WTC11 (cell line): ENCODE measurements at regions of chr1 and their contacts with region 1.

Region 1: DNA sequence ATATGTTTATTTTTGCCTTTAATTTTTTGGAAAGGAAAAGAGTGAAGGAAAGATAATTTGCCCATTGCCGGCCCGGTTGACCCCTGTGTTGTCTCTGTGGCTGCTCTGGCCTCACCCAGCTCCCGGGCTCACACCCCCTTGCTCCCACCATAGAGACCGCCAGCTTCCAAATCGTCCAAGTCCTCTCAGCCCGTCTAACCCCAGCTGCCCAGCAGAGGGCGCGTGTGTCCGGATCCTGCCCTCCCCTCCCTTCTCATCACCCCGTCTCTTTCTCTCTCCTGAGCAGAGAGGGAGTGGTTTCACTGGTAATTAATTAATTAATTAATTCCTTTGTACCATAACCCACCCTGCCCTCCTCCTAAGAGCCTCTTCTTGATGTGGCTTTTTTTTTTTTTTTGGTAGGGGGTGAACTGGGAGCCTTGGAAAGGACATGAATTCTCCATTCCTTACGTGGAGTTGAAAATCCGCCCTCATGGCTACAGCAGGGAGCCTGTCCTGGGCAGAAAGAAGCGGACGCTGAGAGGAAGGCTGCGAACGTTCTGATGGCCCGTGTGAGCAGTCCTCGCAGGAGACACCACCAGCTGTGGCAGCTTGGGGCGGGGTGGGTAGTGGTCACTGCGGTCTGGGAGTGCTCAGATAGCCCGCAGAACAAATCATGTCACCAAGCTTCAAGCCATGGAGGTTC is 45.9 kb downstream of the KIAA0040 start:
- DNase-seq: peak; percentile 91
- ATAC-seq: peak; percentile 96
- H3K4me3 Mint-ChIP-seq: no peak overlapping the region
- H3K27ac Mint-ChIP-seq: no peak overlapping the region
- H3K4me1 Mint-ChIP-seq: peaks cover 43% of the 10 kb centered on the region
- H3K27me3 Mint-ChIP-seq: peaks cover 27% of the 10 kb centered on the region
- CTCF ChIP-seq: peak; percentile 84

Region 2: DNA sequence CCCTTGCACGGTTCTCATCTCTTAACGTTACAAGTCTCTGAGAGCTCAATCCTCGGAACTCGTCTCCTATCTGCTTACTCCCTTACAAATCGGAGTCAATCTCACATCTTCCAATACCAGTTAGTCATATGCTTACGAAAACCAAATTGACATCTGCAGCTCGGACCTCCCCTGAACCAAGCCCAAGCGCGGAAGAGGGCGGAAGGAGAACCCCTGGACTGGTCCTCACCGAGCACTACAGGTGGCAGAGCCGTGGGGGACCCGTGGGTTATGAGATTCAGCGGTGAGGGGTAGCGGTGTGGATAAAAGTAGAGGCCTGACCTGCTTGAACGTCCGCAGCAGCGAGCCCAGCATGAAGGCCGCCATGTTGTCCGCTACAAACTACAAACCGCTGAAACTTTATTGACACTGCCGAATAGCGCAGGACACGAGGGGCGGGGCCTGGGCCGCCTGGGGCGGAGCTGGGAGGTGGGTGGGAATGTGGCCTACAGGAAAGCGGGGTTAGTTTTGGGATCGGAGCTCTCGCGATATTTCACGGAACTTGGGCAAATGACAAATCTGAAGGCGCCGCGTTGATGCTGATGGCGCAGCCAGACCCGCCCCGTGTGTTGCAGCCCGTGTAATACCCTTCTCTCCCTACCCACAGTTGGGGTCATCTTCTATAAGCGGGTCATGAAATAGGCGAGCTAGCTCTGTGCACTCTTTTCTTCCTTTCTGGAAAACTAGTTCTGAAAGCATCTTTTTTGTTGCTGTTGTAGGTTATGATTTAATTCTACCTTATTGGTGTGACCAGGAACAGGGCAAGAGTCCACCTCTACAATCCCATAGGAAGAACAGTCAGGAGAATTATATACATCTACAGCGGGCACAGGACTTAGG is 123.4 kb before region 1 on chr1 and contains the start of gene MRPS14:
- CTCF ChIA-PET with region 1: interaction called, 84 read pairs
- POLR2A ChIA-PET with region 1: interaction called, 3 read pairs
- DNase-seq: peak; percentile 99
- ATAC-seq: peak; percentile 97
- H3K4me3 Mint-ChIP-seq: peak within 1 kb of the TSS; percentile 98
- H3K27ac Mint-ChIP-seq: peak within 1 kb of the TSS; percentile 97
- H3K4me1 Mint-ChIP-seq: peaks cover 4% of the 10 kb centered on the region
- H3K27me3 Mint-ChIP-seq: no peaks in the 10 kb centered on the region
- CTCF ChIP-seq: no peak
- total RNA-seq, gene MRPS14: 30.4 to 33.1 TPM (median 32.1 TPM) in 3 replicates

Region 3: DNA sequence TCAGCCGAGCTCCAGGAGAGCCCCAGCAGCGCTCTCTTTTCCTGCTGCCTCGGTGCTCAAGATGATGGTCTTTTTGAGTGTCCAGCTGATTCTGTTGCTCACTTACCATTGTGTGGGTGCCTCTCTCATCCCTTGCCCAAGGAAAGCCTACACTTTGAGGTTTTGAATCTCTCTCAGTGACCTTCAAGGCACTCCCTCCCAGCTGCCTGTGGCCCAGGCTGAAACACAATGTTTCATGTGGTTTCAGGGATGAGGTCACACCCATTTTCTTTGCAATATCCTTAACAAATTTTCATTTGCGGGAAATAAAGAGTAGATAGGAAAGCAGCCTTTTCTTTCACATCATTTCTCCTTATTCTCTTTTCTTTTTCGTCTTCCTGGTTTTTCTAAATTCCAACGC is 110.8 kb before region 1 on chr1:
- CTCF ChIA-PET with region 1: interaction called, 17 read pairs
- POLR2A ChIA-PET with region 1: no interaction called
- DNase-seq: no peak
- ATAC-seq: no peak
- H3K4me3 Mint-ChIP-seq: no peak overlapping the region; the same call in 1 of the 2 replicates
- H3K27ac Mint-ChIP-seq: no peak overlapping the region
- H3K4me1 Mint-ChIP-seq: peaks cover 22% of the 10 kb centered on the region
- H3K27me3 Mint-ChIP-seq: no peaks in the 10 kb centered on the region
- CTCF ChIP-seq: no peak

Region 4: DNA sequence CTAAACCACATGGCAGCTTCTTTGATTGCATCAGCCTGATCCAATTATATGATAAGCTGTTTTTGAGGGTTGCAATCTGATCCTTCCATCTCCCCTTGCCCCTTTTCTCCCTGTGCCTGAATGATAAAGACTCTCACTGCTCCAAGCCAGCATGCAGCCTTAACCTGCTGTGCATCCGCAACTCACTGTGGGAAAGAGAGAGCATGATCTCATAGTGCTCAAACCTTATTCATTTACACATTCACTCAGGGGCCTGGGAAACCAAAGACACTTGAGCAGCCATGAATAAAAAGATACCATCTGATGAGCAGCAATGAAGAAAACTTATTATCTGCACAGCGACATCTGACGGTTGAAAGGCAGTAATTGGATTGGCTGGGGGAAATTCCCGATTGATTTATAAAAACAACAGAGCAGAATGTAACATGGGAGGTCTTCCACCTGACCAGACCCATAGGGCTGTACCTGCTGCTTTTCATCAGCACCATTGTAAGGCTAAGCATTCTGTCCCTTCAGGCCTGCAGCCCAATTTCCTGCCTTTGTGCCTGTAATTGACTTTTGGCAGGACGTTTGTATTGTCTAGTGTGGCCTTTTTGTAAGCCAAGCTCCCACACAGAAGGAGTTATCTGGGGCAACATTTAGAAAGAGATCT is 16.5 kb before region 1 on chr1:
- CTCF ChIA-PET with region 1: interaction called, 110 read pairs
- POLR2A ChIA-PET with region 1: interaction called, 4 read pairs
- DNase-seq: peak; percentile 36
- ATAC-seq: peak; percentile 85
- H3K4me3 Mint-ChIP-seq: peak overlapping the region; percentile 13
- H3K27ac Mint-ChIP-seq: peak overlapping the region; percentile 95
- H3K4me1 Mint-ChIP-seq: peaks cover 52% of the 10 kb centered on the region
- H3K27me3 Mint-ChIP-seq: no peaks in the 10 kb centered on the region
- CTCF ChIP-seq: no peak